GM12878 (cell line): ENCODE measurements at regions of chr19 and their contacts with region 1.

Region 1: DNA sequence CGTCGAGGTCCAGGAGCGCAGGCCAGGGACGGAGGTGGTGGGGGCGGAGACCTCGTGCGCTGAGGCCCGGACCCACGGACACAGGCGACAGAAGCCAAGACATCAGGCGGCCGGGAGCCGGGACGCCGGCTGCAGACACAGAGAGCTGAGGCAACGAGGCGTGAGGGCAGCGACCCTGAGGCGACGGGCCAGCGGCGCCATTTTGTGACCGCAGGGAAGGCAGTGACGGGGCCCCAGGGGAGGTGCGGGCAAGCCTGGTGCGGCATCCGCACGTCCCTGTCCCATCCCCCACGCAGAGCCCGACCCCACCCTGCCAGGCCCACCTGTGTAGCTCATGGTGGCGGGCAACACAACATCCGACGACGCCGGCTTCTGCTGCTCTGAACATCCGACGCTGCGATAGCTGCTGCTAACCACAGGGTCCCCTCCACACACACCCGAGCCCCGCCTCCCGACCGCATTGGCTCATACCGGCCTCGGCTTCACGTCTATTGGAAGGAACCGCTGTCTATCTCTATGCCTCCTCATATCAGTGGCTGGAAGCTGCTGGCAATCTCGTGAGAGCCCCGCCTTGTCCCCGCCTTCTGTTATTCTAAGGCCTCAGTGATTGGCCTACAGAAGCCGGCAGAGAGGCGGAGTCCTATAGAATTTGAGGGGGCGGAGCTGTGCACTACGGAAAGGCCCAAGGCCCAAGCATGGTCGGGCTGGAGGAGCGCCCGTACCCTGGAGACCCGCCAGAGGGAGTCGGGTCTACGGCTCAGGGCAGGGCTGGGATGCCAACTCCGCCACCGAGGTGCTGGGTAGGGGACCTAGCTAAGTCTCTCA is at the start of gene AKAP8L:
- DNase-seq: peak; percentile 99
- ATAC-seq: peak; percentile 99
- H3K4me3 ChIP-seq: peak within 1 kb of the TSS; percentile 98
- H3K27ac ChIP-seq: peak within 1 kb of the TSS; percentile 88
- H3K4me1 ChIP-seq: peaks cover 8% of the 10 kb centered on the region
- H3K27me3 ChIP-seq: no peaks in the 10 kb centered on the region
- CTCF ChIP-seq: peak; percentile 87 to 93 (median 89)
- EP300 ChIP-seq: 0 out of 4 replicates have a peak, but pooled peaks of 1 of the 2 experiments have one; percentile 27
- POLR2A ChIP-seq: peak; percentile 97
- RAD21 ChIP-seq: peak; percentile 77
- polyA plus RNA-seq, gene AKAP8L: 0.66 to 3.8 TPM

Region 2: GRCh38 chr19:15177269-15178116 is 241.3 kb before region 1 on chr19:
- CTCF ChIA-PET with region 1: interaction called, 11 read pairs
- POLR2A ChIA-PET with region 1: no interaction called
- RAD21 ChIA-PET with region 1: no interaction called
- SMC1A ChIA-PET with region 1: interaction called, 4 read pairs
- in situ Hi-C with region 1: no loop called
- intact Hi-C with region 1: loop called (anchors 2 kb)
- DNase-seq: peak; percentile 4
- ATAC-seq: peak; percentile 99
- H3K4me3 ChIP-seq: no peak overlapping the region
- H3K27ac ChIP-seq: no peak overlapping the region
- H3K4me1 ChIP-seq: no peaks in the 10 kb centered on the region
- H3K27me3 ChIP-seq: no peaks in the 10 kb centered on the region
- CTCF ChIP-seq: peak; percentile 82 to 99 (median 87)
- EP300 ChIP-seq: no peak
- POLR2A ChIP-seq: no peak
- RAD21 ChIP-seq: peak; percentile 66

Region 3: DNA sequence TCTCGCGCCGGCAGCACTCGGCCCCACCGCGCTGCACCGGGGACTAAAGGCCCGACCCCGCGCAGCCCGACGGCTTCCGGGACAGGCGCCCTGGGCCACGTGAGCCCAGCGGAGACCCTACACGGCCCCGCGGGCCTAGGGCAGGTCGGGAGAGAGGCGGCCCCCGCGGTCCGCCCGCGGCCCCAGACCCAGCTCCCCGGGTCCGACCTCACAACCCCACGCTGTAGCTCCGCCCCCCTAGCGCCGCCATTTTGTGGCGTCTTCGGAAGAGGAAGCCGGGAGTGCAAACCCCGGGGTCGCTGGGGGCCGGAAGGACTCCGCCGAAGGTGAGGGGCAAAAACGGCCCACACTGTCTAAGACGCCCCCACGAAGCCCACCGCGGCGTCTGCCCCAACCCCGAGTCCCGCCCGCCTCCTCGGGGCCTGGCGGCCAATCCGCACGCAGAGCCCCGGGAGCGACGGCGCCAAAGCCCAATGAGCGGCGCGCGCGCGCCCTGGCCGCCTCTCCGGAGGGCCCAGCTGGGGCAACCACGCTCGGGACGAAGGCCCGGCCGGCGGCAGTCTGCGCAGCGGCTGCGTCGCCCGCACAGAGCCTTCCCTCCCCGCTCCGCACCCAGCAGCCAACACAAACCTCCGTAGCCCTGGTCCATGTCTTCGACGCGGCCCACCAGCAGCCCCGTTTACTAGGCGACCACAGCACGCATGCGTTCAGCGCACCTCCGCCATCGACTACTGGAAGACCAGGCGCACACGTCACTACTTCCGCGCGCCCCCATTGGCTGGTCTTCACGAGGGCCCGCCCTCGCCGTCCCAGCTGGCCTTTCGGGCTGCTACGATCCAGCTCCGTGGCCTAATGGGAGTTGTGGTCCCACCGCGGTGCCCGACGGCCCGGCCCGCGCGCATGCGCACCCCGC is 39.5 kb before region 1 on chr19 and contains the start of gene AKAP8:
- CTCF ChIA-PET with region 1: interaction called, 28 read pairs
- POLR2A ChIA-PET with region 1: interaction called, 19 read pairs
- RAD21 ChIA-PET with region 1: interaction called, 43 read pairs
- SMC1A ChIA-PET with region 1: interaction called, 34 read pairs
- in situ Hi-C with region 1: no loop called
- intact Hi-C with region 1: no loop called
- DNase-seq: peak; percentile 94
- ATAC-seq: peak; percentile 92
- H3K4me3 ChIP-seq: peak within 1 kb of the TSS; percentile 94
- H3K27ac ChIP-seq: peak within 1 kb of the TSS; percentile 91
- H3K4me1 ChIP-seq: peaks cover 23% of the 10 kb centered on the region
- H3K27me3 ChIP-seq: no peaks in the 10 kb centered on the region
- CTCF ChIP-seq: no peak
- EP300 ChIP-seq: no peak
- POLR2A ChIP-seq: peak; percentile 90
- RAD21 ChIP-seq: no peak
- polyA plus RNA-seq, gene AKAP8: 5.3 to 5.5 TPM

Region 4: DNA sequence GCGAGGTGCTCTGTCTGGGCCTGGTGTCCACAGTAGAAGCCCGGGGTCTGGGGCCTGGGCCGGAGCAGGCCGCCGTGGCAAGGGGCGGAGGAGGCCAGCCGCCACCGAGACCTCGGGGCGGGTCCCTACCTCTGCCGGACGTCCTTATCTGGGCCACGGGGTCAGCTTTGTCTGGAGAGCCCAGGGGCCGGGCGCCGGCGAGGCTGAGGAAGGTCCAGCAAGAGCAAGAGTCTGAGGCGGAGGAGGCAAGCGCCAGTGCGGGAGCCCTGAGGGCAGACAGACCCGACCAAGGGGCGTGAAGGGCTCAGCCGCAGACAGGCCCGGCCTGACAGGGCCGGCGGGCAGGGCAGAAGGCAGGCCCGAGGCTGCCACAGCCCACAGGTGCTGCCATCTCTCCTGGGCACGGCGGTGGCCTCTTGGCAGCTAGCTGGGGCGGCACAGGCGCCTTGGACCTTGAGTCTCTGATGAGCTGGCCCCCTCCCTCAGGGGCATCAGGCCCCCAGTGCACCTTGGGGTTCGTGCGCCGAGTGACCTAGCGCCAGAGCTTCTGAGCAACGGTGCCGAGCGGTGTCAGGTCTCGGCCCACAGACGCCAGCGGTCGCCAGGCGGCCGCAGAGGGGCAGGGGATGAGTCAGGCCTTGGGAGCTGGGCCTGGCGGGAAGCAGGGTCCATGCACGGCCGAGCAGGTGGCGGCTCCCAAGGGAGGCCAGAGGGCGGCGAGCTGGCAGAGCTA is 20.1 kb before region 1 on chr19:
- CTCF ChIA-PET with region 1: no interaction called
- POLR2A ChIA-PET with region 1: no interaction called
- RAD21 ChIA-PET with region 1: no interaction called
- SMC1A ChIA-PET with region 1: no interaction called
- in situ Hi-C with region 1: no loop called
- intact Hi-C with region 1: no loop called
- DNase-seq: no peak
- ATAC-seq: no peak
- H3K4me3 ChIP-seq: no peak overlapping the region
- H3K27ac ChIP-seq: no peak overlapping the region
- H3K4me1 ChIP-seq: no peaks in the 10 kb centered on the region
- H3K27me3 ChIP-seq: no peaks in the 10 kb centered on the region
- CTCF ChIP-seq: no peak
- EP300 ChIP-seq: no peak
- POLR2A ChIP-seq: peak; percentile 30; the same call in 1 of the 2 replicates
- RAD21 ChIP-seq: no peak

Region 5: DNA sequence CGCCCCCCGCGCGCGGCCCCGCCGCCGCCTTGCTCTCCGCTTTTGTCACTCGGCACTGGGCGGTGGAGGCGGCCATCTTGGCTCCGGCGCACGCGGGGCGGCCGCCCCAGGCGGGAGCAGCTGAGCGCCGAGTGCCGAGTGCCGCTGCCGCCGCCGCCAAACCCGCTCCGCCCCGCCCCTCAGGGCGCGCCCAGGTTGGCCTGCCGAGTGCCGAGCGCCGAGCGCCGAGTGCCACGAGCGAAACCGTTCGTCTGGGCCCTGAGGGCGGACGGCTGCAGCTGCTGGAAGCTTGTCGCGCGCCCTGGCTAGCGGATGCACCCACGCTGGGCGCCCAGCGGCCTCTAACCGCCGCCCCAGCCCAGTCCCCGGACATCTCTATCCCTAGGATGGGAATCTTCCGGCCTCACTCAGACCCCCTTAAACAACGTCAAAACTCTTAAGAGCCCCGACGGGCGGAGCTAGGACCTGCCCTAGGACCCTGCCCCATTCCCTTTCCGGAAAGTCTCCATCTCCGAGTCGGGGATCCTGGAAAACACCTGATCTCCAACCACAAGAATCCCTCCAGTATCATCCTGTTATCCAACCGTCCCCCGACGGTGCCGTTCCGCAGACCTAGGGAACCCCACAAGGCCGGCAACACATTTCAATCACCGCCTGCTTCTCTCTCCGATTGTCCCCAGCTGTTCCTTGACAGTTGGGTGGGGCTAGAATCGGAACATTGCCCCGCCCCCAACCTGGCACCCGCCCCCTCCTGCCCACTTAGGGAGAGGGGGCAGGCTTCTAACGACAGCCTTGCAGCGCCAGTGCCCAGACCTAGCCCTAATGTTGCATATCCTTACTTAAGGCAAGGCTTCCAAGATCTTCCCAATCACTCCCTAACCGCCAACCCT is 14.1 kb after region 1 on chr19:
- CTCF ChIA-PET with region 1: interaction called, 20 read pairs
- POLR2A ChIA-PET with region 1: interaction called, 9 read pairs
- RAD21 ChIA-PET with region 1: interaction called, 14 read pairs
- SMC1A ChIA-PET with region 1: interaction called, 6 read pairs
- in situ Hi-C with region 1: no loop called
- intact Hi-C with region 1: loop called (anchors 2 kb)
- DNase-seq: peak; percentile 36
- ATAC-seq: peak; percentile 88
- H3K4me3 ChIP-seq: peak overlapping the region; percentile 94
- H3K27ac ChIP-seq: peak overlapping the region; percentile 83
- H3K4me1 ChIP-seq: peaks cover 10% of the 10 kb centered on the region
- H3K27me3 ChIP-seq: no peaks in the 10 kb centered on the region
- CTCF ChIP-seq: no peak
- EP300 ChIP-seq: no peak; a peak in 1 of 4 replicates
- POLR2A ChIP-seq: peak; percentile 87
- RAD21 ChIP-seq: no peak

Region 6: DNA sequence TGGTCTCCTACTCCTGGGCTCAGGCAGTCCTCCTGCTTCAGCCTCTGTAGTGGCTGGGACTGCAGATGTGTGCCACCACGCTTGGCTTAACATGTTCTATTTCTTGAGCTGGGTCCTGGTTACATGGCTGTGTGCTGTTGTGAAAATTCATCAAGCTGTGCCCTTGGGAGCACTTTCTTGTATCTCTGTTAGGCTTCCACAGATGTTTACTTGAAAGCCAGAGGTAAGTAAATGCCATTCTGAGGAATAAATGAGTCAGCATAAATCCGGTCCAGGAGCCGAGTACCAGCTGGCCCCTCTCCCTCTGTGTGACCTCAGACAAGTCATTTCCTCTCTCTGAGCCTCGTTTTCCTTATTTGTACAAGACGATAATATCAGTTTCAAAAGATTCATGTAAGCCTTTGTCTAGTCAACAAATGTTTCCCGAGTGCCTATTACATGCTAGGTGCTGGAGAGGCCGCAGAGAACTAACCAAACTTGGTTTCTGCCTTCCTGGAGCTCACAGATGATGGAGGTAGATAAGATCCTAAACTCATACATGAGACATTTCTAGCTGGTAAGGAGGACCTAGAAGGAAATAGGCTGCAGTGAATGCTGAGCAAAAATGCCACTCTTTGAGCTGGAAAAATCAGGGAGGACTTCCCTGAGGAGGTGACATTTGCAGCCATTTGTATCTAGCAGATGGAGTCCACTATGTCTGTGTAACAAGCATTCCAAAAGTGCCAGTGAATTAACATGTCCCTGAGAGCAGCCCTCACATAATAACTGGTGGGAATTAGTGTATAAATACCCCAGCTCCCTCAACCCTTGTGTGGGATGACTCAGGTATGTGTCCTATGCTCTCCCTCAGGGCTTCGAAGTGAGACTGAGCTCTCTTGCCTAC is 48.3 kb after region 1 on chr19:
- CTCF ChIA-PET with region 1: interaction called, 9 read pairs
- POLR2A ChIA-PET with region 1: interaction called, 10 read pairs
- RAD21 ChIA-PET with region 1: interaction called, 10 read pairs
- SMC1A ChIA-PET with region 1: interaction called, 26 read pairs
- in situ Hi-C with region 1: no loop called
- intact Hi-C with region 1: loop called (anchors 10 kb)
- DNase-seq: peak; percentile 97
- ATAC-seq: peak; percentile 71
- H3K4me3 ChIP-seq: peak overlapping the region; percentile 17; the same call in 1 of the 2 replicates
- H3K27ac ChIP-seq: peak overlapping the region; percentile 80
- H3K4me1 ChIP-seq: peaks cover 22% of the 10 kb centered on the region
- H3K27me3 ChIP-seq: no peaks in the 10 kb centered on the region
- CTCF ChIP-seq: no peak
- EP300 ChIP-seq: peak in 1 of 2 experiments; percentile 25; a peak in 1 of 4 replicates
- POLR2A ChIP-seq: no peak
- RAD21 ChIP-seq: no peak